CD8-positive, alpha-beta T cell (primary cell): ENCODE measurements at regions of chr6 and their contacts with region 1.

Region 1: GRCh38 chr6:165884813-165885765 is 222.0 kb upstream of the PDE10A start:
- DNase-seq: peak; percentile 43 to 76 (median 66)
- ATAC-seq: peak; percentile 96
- H3K4me3 ChIP-seq: no peak overlapping the region
- H3K4me3 Mint-ChIP-seq: peak overlapping the region; percentile 76
- H3K27ac ChIP-seq: no peak overlapping the region
- H3K27ac Mint-ChIP-seq: peak overlapping the region; percentile 27
- H3K4me1 ChIP-seq: no peaks in the 10 kb centered on the region
- H3K4me1 Mint-ChIP-seq: peaks cover 15% of the 10 kb centered on the region
- H3K27me3 ChIP-seq: peaks cover 0 to 2% of the 10 kb centered on the region in 2 experiments
- H3K27me3 Mint-ChIP-seq: peaks cover 6% of the 10 kb centered on the region
- CTCF ChIP-seq: peak; percentile 74

Region 2: GRCh38 chr6:164085091-164086075 is 1799.7 kb before region 1 on chr6:
- CTCF ChIA-PET with region 1: no interaction called
- POLR2A ChIA-PET with region 1: no interaction called
- intact Hi-C with region 1: no loop called
- DNase-seq: no peak
- ATAC-seq: no peak
- H3K4me3 ChIP-seq: peak overlapping the region in 1 of 2 experiments; percentile 13
- H3K4me3 Mint-ChIP-seq: peak overlapping the region; percentile 46
- H3K27ac ChIP-seq: peak overlapping the region in 1 of 2 experiments; percentile 26
- H3K27ac Mint-ChIP-seq: no peak overlapping the region
- H3K4me1 ChIP-seq: no peaks in the 10 kb centered on the region
- H3K4me1 Mint-ChIP-seq: no peaks in the 10 kb centered on the region
- H3K27me3 ChIP-seq: no peaks in the 10 kb centered on the region
- H3K27me3 Mint-ChIP-seq: peaks cover 11% of the 10 kb centered on the region
- CTCF ChIP-seq: no peak

Region 3: GRCh38 chr6:166097915-166098522 is 212.9 kb after region 1 on chr6:
- CTCF ChIA-PET with region 1: interaction called, 37 read pairs
- POLR2A ChIA-PET with region 1: no interaction called
- intact Hi-C with region 1: loop called (anchors 1 kb)
- DNase-seq: peak; percentile 27 to 56 (median 44)
- ATAC-seq: peak; percentile 56
- H3K4me3 ChIP-seq: peak overlapping the region in 1 of 2 experiments; percentile 15
- H3K4me3 Mint-ChIP-seq: peak overlapping the region; percentile 26
- H3K27ac ChIP-seq: no peak overlapping the region
- H3K27ac Mint-ChIP-seq: no peak overlapping the region
- H3K4me1 ChIP-seq: no peaks in the 10 kb centered on the region
- H3K4me1 Mint-ChIP-seq: peaks cover 2% of the 10 kb centered on the region
- H3K27me3 ChIP-seq: peaks cover 5 to 9% of the 10 kb centered on the region in 2 experiments
- H3K27me3 Mint-ChIP-seq: peaks cover 39% of the 10 kb centered on the region
- CTCF ChIP-seq: peak; percentile 73

Region 4: DNA sequence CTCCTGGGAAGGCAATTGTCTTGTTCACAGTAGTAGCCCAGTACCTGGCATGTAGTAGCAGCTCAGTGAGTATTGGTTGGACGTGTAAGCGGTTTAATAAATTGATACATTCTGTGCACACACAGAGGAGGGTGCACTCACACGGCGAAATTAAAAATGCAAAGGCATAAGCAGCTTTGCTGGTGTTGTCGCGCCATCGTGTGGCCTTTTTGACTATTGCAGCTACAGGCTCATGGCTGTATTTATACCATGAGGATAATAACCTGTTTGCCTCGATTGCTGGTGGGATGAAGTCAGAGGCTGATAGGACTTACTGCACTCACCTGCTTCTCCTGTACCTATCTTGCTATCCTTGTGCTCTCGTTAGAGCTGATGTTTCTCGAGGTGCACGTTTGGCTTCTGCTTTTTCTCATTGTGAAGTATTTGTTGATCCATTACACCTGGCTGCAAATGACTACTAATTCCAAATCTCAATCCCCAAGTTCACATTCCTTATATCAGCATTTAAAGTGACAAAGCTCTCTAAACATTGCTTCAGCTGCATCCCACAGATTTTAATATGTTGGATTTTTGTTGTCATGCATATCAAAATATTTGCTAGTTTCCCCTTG is 221.1 kb after region 1 on chr6:
- CTCF ChIA-PET with region 1: interaction called, 37 read pairs
- POLR2A ChIA-PET with region 1: no interaction called
- intact Hi-C with region 1: loop called (anchors 1 kb)
- DNase-seq: peak; percentile 25 to 67 (median 55)
- ATAC-seq: peak; percentile 71
- H3K4me3 ChIP-seq: no peak overlapping the region
- H3K4me3 Mint-ChIP-seq: no peak overlapping the region
- H3K27ac ChIP-seq: no peak overlapping the region
- H3K27ac Mint-ChIP-seq: no peak overlapping the region
- H3K4me1 ChIP-seq: no peaks in the 10 kb centered on the region
- H3K4me1 Mint-ChIP-seq: peaks cover 7% of the 10 kb centered on the region
- H3K27me3 ChIP-seq: no peaks in the 10 kb centered on the region
- H3K27me3 Mint-ChIP-seq: peaks cover 14% of the 10 kb centered on the region
- CTCF ChIP-seq: peak; percentile 76